A673 (cell line): ENCODE measurements at regions of chr1 and their contacts with region 1.

Region 1: DNA sequence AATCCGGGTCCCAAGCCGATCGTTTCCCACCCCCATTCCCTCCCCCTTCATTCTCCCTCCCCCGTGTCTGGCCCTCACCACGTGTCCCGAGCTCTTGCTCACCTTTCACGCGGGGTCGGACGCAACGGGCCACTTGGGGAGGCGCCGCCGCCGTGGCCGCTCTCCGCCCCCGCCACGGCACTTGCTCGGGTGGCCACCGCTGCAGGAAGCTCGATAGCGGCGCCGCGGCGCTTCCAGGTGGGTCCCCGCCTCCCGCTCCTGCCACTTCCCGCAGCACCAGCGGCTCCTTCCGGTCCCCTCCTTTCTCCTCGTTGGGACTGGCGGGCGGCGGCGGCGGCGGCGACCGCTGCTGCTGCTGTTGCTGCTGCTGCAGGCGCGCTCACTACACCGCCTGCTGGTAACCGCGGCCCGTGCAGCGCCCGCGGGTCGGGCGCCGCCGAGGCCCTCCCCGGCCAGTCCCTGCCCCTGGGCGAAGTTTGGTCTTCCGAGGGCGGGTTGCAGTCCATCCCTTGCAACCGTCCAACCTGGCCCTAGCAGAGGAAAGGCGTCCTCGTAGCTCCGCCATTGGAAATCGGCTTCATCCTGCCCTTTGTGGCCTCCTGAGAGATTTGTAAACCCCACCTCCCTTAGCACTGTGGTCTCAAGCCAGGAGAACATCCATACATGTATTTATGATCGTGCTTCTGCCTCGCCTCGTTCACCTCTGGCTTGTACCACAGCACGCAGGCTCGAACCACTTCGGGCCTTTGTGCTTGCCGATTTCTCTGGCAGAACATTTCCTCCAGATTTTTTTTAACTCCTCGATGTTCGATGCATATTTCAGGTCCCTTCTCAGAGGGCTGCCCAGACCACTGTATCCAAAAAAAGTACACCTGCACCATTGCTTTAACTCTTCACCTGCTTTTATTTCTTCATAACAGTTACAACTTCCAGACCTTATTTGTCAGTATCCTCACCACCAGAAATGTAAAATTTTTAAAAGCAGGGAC is 996 bp upstream of the ZZZ3 start:
- DNase-seq: peak; percentile 95
- H3K4me3 ChIP-seq: peak overlapping the region; percentile 81
- H3K27ac ChIP-seq: peak overlapping the region; percentile 94
- H3K4me1 ChIP-seq: peaks cover 38% of the 10 kb centered on the region
- H3K27me3 ChIP-seq: no peaks in the 10 kb centered on the region
- CTCF ChIP-seq: peak; percentile 80

Region 2: DNA sequence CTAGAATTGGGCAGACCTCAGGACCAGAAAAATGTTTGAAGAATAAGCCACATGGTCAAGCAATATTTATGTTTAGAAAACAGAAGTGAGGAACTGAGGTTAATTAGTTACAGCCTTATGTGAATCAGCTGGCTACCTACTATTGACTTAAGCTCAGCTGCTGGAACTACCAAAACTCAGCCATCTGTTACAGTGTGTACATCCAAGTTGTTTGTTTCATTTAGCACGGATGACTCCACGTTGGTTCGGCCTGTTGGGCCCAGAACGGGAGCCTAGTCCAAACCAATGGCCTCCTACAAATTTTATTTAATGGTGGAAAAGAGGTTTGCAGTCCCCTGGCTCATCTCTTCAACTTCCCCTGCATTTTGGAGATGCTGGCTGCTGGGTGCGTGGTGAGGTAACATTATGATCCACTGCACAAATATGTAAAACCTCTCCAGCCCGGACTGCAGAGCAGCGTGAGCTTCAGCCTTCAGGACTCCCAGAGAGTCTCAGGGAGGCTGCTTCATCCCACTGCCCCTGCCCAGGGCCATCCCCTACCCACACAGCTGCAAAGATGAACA is 144.4 kb before region 1 on chr1:
- CTCF ChIA-PET with region 1: no interaction called
- POLR2A ChIA-PET with region 1: no interaction called
- intact Hi-C with region 1: loop called (anchors 5 kb)
- DNase-seq: no peak
- H3K4me3 ChIP-seq: no peak overlapping the region
- H3K27ac ChIP-seq: no peak overlapping the region
- H3K4me1 ChIP-seq: peaks cover 13% of the 10 kb centered on the region
- H3K27me3 ChIP-seq: no peaks in the 10 kb centered on the region
- CTCF ChIP-seq: no peak

Region 3: GRCh38 chr1:77565321-77565720 is 118.1 kb before region 1 on chr1:
- CTCF ChIA-PET with region 1: no interaction called
- POLR2A ChIA-PET with region 1: no interaction called
- intact Hi-C with region 1: loop called (anchors 10 kb)
- DNase-seq: peak; percentile 93
- H3K4me3 ChIP-seq: no peak overlapping the region
- H3K27ac ChIP-seq: peak overlapping the region; percentile 74
- H3K4me1 ChIP-seq: peaks cover 27% of the 10 kb centered on the region
- H3K27me3 ChIP-seq: no peaks in the 10 kb centered on the region
- CTCF ChIP-seq: no peak

Region 4: GRCh38 chr1:77620273-77620672 is 63.2 kb before region 1 on chr1:
- CTCF ChIA-PET with region 1: no interaction called
- POLR2A ChIA-PET with region 1: no interaction called
- intact Hi-C with region 1: loop called (anchors 2 kb)
- DNase-seq: peak; percentile 91
- H3K4me3 ChIP-seq: no peak overlapping the region
- H3K27ac ChIP-seq: peak overlapping the region; percentile 93
- H3K4me1 ChIP-seq: peaks cover 72% of the 10 kb centered on the region
- H3K27me3 ChIP-seq: no peaks in the 10 kb centered on the region
- CTCF ChIP-seq: no peak

Region 5: GRCh38 chr1:77668924-77669449 is 14.5 kb before region 1 on chr1:
- CTCF ChIA-PET with region 1: interaction called, 13 read pairs
- POLR2A ChIA-PET with region 1: no interaction called
- intact Hi-C with region 1: no loop called
- DNase-seq: peak; percentile 70
- H3K4me3 ChIP-seq: no peak overlapping the region
- H3K27ac ChIP-seq: no peak overlapping the region
- H3K4me1 ChIP-seq: peaks cover 48% of the 10 kb centered on the region
- H3K27me3 ChIP-seq: no peaks in the 10 kb centered on the region
- CTCF ChIP-seq: no peak

Region 6: GRCh38 chr1:78054559-78054958 is 371.1 kb after region 1 on chr1:
- CTCF ChIA-PET with region 1: no interaction called
- POLR2A ChIA-PET with region 1: no interaction called
- intact Hi-C with region 1: no loop called
- DNase-seq: no peak
- H3K4me3 ChIP-seq: no peak overlapping the region
- H3K27ac ChIP-seq: no peak overlapping the region
- H3K4me1 ChIP-seq: no peaks in the 10 kb centered on the region
- H3K27me3 ChIP-seq: no peaks in the 10 kb centered on the region
- CTCF ChIP-seq: no peak